ENCODE measurements at regions of chr4 and their contacts with region 1.

Region 1: DNA sequence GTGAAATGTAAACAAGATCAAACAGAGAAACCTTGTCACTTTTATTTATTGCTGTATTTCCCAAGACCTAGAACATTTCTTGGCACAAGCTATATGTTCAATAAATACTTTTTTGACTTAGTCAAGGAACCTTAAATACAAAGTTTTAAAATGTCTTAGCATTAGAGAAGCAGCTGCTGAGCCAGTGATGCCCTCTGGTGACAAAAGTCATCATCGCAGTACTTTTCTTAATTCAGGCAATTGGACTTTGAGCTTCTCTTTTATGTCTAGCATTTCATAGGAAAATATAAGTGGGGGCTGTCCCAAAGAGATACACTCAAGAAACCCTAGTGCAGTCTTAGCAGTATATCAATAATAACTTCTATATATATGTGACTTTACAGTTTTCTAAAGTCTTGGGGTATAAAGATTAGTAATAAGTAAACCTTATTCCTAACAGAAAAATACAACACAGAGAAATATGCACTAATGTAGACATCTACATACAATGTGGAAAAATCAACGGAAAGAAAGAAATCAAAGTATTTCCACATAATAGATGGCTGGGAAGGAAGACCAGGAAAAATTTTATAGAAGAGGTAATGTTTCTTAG is 118.4 kb downstream of the DTHD1 start:
- DNase-seq: peak in 2 of 10 donors; percentile 50 to 55
- H3K4me3 ChIP-seq: no peak overlapping the region
- H3K27ac ChIP-seq: peak overlapping the region in 8 of 59 donors; percentile 3 to 47 (median 26)
- H3K27me3 ChIP-seq: no peaks in the 10 kb centered on the region
- CTCF ChIP-seq: peak; percentile 42 to 94 (median 74)

Region 2: DNA sequence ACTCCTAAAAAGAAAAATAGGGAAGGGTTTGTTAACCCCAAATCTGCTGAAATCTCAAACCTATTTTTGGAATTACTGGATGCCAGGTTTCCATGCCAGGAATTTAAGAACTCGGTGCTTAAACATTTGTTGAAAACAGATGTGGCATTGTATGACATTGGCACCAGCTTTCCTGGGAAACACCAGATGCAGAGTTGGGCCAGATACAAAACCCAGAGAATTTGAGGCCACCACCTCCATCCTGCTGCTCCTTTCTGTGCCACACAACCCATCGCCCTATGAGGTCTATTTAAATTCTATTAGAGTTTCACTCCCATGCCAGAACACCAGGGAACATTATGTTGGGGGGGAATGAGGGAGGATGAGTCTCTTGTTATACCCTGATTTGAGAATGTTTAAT is 227.2 kb before region 1 on chr4:
- intact Hi-C with region 1: loop called in 1 of 2 experiments (anchors 5 kb)
- DNase-seq: peak in 2 of 10 donors; percentile 45 to 48
- H3K4me3 ChIP-seq: peak overlapping the region in 11 of 59 donors; percentile 5 to 22 (median 13)
- H3K27ac ChIP-seq: peak overlapping the region in 57 of 59 donors; percentile 7 to 88 (median 65)
- H3K27me3 ChIP-seq: no peaks in the 10 kb centered on the region
- CTCF ChIP-seq: no peak

Region 3: GRCh38 chr4:36285784-36286480 is 113.9 kb before region 1 on chr4:
- intact Hi-C with region 1: loop called in 1 of 2 experiments (anchors 10 kb)
- DNase-seq: no peak
- H3K4me3 ChIP-seq: no peak overlapping the region
- H3K27ac ChIP-seq: peak overlapping the region in 51 of 59 donors; percentile 24 to 99 (median 94)
- H3K27me3 ChIP-seq: no peaks in the 10 kb centered on the region
- CTCF ChIP-seq: no peak

Region 4: DNA sequence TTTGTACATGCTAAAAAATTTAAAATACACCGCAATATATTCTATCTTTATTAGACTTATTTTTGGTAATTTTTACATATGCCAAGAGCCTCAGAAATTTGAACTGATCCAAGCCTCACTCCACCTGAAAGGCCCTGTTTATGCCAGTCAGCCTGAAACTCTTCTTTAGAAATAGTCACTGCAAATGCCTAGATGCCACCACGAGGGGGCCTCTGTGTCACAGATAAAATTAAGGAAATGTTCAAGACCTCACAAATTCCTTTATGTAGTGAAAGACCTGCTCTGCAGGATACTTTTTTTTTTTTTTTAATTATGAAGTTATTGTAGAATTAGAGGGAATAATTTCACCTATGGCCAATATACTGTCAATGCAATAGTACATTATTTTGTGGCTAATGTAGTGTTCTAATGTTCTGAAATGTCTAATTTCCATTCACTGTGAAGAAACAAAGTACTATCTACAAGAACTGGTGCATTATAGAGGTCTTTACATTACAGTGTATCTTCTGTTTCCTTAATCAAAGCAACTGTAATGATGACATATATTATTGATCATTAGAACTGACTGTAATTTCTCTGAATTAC is 48.7 kb before region 1 on chr4:
- intact Hi-C with region 1: loop called (anchors 5 kb)
- DNase-seq: peak; percentile 28 to 93 (median 77)
- H3K4me3 ChIP-seq: peak overlapping the region in 9 of 59 donors; percentile 7 to 50 (median 29)
- H3K27ac ChIP-seq: peak overlapping the region in 54 of 59 donors; percentile 34 to 90 (median 78)
- H3K27me3 ChIP-seq: no peaks in the 10 kb centered on the region
- CTCF ChIP-seq: peak; percentile 66 to 96 (median 87)

Region 5: GRCh38 chr4:37389967-37390580 is 990.2 kb after region 1 on chr4:
- intact Hi-C with region 1: loop called in 1 of 2 experiments (anchors 5 kb)
- DNase-seq: no peak
- H3K4me3 ChIP-seq: peak overlapping the region in 22 of 59 donors; percentile 3 to 47 (median 23)
- H3K27ac ChIP-seq: no peak overlapping the region
- H3K27me3 ChIP-seq: no peaks in the 10 kb centered on the region
- CTCF ChIP-seq: peak; percentile 70 to 98 (median 83)

Measured in dorsolateral prefrontal cortex (tissue), 120 donors.